Naive thymus-derived CD4-positive, alpha-beta T cell (primary cell): ENCODE measurements at regions of chr17 and their contacts with region 1.

Region 1: GRCh38 chr17:48892940-48893645 is 506 bp downstream of the ATP5MC1 start:
- DNase-seq: peak in 2 of 9 donors; percentile 11 to 14
- ATAC-seq: no peak
- H3K4me3 ChIP-seq: peak overlapping the region; percentile 60
- H3K4me3 Mint-ChIP-seq: peak overlapping the region; percentile 87 to 98 (median 94)
- H3K27ac ChIP-seq: peak overlapping the region; percentile 82
- H3K27ac Mint-ChIP-seq: peak overlapping the region; percentile 91 to 100 (median 93)
- H3K4me1 ChIP-seq: peaks cover 5 to 16% of the 10 kb centered on the region in 2 donors
- H3K4me1 Mint-ChIP-seq: peaks cover 17 to 42% (median 29%) of the 10 kb centered on the region in 7 donors
- H3K27me3 ChIP-seq: no peaks in the 10 kb centered on the region
- H3K27me3 Mint-ChIP-seq: peaks cover 0 to 3% (median 0%) of the 10 kb centered on the region in 5 donors

Region 2: GRCh38 chr17:47895856-47896671 is 997.0 kb before region 1 on chr17 and contains the start of gene SP2:
- CTCF ChIA-PET with region 1: no interaction called
- POLR2A ChIA-PET with region 1: no interaction called
- intact Hi-C with region 1: loop called (anchors 1 to 5 kb)
- DNase-seq: peak; percentile 96 to 100 (median 100)
- ATAC-seq: peak; percentile 92
- H3K4me3 ChIP-seq: peak within 1 kb of the TSS; percentile 80
- H3K4me3 Mint-ChIP-seq: peak within 1 kb of the TSS; percentile 88 to 100 (median 97)
- H3K27ac ChIP-seq: peak within 1 kb of the TSS; percentile 98
- H3K27ac Mint-ChIP-seq: peak within 1 kb of the TSS; percentile 98 to 100 (median 99)
- H3K4me1 ChIP-seq: peaks cover 20 to 23% of the 10 kb centered on the region in 2 donors
- H3K4me1 Mint-ChIP-seq: peaks cover 31 to 66% (median 57%) of the 10 kb centered on the region in 7 donors
- H3K27me3 ChIP-seq: no peaks in the 10 kb centered on the region
- H3K27me3 Mint-ChIP-seq: peaks cover 0 to 4% (median 0%) of the 10 kb centered on the region in 5 donors
- total RNA-seq, gene SP2: 25.2 to 36.5 (median 30.8) TPM

Region 3: DNA sequence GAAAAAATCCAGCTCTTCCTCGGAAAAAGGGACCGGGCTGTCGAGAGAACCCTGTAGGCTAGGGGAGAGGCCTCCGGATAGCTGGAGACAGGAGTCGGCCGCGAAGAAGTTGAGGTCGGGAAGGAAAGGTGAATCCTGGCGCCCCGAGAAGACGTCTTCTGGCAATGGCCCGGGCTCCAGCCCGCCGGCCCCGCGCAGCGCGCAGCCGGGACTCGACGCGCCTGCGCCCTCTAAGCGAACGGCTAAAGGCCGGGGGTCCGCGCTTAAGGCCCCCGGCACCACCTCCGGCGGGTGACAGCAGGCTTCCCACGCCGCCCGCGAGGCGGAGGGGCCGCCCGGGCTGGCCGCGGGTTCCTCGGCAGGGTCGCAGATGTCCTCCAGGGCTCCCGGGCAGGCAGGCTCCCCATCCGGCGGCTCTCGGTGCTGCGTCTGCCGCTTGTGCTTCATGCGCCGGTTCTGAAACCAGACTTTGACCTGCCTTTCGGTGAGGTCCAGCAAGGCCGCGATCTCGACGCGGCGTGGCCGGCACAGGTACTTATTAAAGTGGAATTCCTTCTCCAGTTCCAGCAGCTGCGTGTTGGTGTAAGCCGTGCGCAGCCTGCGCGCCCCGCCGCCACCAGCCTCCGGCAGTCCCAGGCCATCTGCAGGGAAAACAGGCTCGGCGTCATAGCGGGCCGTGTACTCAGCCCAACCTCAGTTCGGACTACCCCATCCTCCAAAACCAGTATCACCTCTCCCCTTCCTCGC is 349.8 kb before region 1 on chr17:
- CTCF ChIA-PET with region 1: no interaction called
- POLR2A ChIA-PET with region 1: no interaction called
- intact Hi-C with region 1: loop called in 1 of 2 experiments (anchors 10 kb)
- DNase-seq: peak in 8 of 9 donors; percentile 51 to 71 (median 60)
- ATAC-seq: peak; percentile 67
- H3K4me3 ChIP-seq: peak overlapping the region; percentile 80
- H3K4me3 Mint-ChIP-seq: peak overlapping the region; percentile 94 to 100 (median 98)
- H3K27ac ChIP-seq: peak overlapping the region; percentile 90
- H3K27ac Mint-ChIP-seq: peak overlapping the region; percentile 95 to 100 (median 99)
- H3K4me1 ChIP-seq: peaks cover 0 to 31% of the 10 kb centered on the region in 2 donors
- H3K4me1 Mint-ChIP-seq: peaks cover 20 to 72% (median 56%) of the 10 kb centered on the region in 7 donors
- H3K27me3 ChIP-seq: no peaks in the 10 kb centered on the region
- H3K27me3 Mint-ChIP-seq: peaks cover 0 to 23% (median 10%) of the 10 kb centered on the region in 5 donors

Region 4: GRCh38 chr17:48915459-48916282 is 22.6 kb after region 1 on chr17:
- CTCF ChIA-PET with region 1: no interaction called
- POLR2A ChIA-PET with region 1: interaction called, 5 read pairs
- intact Hi-C with region 1: loop called in 1 of 2 experiments (anchors 1 kb)
- DNase-seq: peak in 2 of 9 donors; percentile 30 to 63
- ATAC-seq: peak; percentile 93
- H3K4me3 ChIP-seq: no peak overlapping the region
- H3K4me3 Mint-ChIP-seq: peak overlapping the region in 1 of 10 donors; percentile 87
- H3K27ac ChIP-seq: peak overlapping the region; percentile 23
- H3K27ac Mint-ChIP-seq: peak overlapping the region in 8 of 9 donors; percentile 10 to 99 (median 64)
- H3K4me1 ChIP-seq: peaks cover 9 to 18% of the 10 kb centered on the region in 2 donors
- H3K4me1 Mint-ChIP-seq: peaks cover 25 to 58% (median 46%) of the 10 kb centered on the region in 7 donors
- H3K27me3 ChIP-seq: no peaks in the 10 kb centered on the region
- H3K27me3 Mint-ChIP-seq: no peaks in the 10 kb centered on the region

Region 5: DNA sequence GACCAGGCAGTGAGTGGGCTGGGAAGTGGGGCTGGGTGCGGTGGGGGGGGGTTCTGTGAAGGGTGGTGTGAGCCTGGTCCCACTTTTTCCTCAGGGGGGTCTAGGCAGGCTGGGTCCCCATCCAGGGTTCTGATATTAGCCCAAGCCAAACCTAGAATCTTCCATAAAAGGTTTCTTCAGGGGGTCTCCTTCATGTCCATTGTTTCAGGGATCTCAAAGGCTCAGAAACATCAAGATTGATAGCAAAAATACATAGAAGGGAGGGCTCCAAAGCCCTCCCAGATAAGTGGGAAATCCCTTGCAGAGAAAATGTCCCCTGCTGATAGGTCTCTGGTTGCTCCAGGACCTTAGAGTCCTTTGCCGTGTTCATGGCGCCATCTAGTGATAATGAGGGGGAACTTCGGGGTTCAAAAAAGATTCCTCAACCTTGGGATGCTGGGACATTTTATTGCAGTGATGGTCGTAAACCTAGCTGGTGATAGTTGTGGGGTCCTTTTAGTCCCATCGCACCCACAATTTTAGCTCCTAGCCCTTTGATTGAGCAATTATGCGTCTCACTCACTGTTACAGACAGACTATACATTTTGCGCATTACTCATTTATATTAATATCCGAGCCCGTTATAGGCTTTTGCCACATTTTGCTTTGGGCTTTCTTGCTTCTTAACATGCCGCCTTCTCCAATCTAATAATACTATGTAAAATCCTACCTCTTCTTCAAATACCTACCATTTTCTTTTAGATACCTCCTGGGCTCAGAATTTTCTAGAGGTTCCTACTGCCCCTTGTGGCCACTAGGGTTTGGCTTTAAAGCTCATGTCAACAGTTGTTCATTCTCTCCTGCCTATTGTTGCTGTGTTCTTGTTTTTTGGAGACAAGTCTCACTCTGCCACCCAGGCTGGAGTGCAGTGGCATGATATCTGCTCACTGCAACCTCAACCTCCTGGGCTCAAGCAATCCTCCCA is 139.2 kb after region 1 on chr17:
- CTCF ChIA-PET with region 1: no interaction called
- POLR2A ChIA-PET with region 1: no interaction called
- intact Hi-C with region 1: loop called in 1 of 2 experiments (anchors 5 kb)
- DNase-seq: peak in 8 of 9 donors; percentile 7 to 49 (median 41)
- ATAC-seq: peak; percentile 81
- H3K4me3 ChIP-seq: no peak overlapping the region
- H3K4me3 Mint-ChIP-seq: no peak overlapping the region
- H3K27ac ChIP-seq: no peak overlapping the region
- H3K27ac Mint-ChIP-seq: no peak overlapping the region
- H3K4me1 ChIP-seq: no peaks in the 10 kb centered on the region
- H3K4me1 Mint-ChIP-seq: peaks cover 0 to 7% (median 6%) of the 10 kb centered on the region in 7 donors
- H3K27me3 ChIP-seq: no peaks in the 10 kb centered on the region
- H3K27me3 Mint-ChIP-seq: peaks cover 0 to 10% (median 9%) of the 10 kb centered on the region in 5 donors

Region 6: DNA sequence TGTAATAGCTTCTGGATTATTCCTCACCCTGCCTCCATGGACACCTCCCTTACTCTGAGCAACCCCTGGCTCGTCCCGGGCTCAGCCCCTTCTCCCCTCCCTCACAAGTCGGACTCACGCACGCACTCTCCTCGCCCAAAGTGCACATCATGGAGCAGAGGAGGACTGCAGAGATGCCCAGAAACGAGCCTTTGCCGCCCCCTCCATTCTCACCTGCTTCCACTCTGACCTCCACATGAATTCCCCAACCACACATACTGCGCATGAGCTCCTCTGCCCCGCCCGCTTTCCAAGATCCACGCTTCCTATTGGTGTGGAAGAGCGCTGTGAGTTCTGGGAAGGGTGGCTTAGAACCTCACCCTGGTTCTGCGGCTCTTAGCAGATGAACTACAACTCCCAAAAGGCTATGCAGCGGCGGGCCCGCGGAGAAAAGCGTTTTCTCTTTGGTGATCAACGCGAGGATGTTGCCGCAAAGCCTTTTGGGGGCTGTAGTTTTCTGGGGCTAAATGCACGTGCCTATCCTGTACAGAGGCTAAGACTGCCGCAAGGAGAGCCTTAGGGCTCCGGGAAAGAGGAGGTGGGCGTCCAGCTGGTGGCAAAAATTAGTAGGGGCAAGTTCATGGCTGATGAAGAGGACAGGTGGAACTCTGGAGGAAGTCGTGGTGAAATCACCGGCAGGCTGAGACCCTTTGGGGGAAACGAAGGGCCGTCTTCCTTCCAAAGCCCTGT is 521.7 kb after region 1 on chr17 and contains the start of gene PHB1:
- CTCF ChIA-PET with region 1: no interaction called
- POLR2A ChIA-PET with region 1: no interaction called
- intact Hi-C with region 1: loop called in 1 of 2 experiments (anchors 2 kb)
- DNase-seq: peak; percentile 75 to 98 (median 93)
- ATAC-seq: peak; percentile 99
- H3K4me3 ChIP-seq: peak within 1 kb of the TSS; percentile 77
- H3K4me3 Mint-ChIP-seq: peak within 1 kb of the TSS; percentile 92 to 99 (median 96)
- H3K27ac ChIP-seq: peak within 1 kb of the TSS; percentile 77
- H3K27ac Mint-ChIP-seq: peak within 1 kb of the TSS; percentile 78 to 99 (median 92)
- H3K4me1 ChIP-seq: peaks cover 8% of the 10 kb centered on the region in 2 donors
- H3K4me1 Mint-ChIP-seq: peaks cover 11 to 30% (median 26%) of the 10 kb centered on the region in 7 donors
- H3K27me3 ChIP-seq: no peaks in the 10 kb centered on the region
- H3K27me3 Mint-ChIP-seq: peaks cover 0 to 3% (median 0%) of the 10 kb centered on the region in 5 donors
- total RNA-seq, gene PHB1: 50.0 to 186 (median 54.4) TPM